ENCODE measurements at regions of chr10 and their contacts with region 1.

Region 1: GRCh38 chr10:89414146-89414878 is at the start of gene IFIT5:
- DNase-seq: peak; percentile 63 to 85 (median 72)
- H3K4me3 ChIP-seq: peak within 1 kb of the TSS; percentile 62 to 98 (median 87)
- H3K27ac ChIP-seq: peak within 1 kb of the TSS; percentile 80 to 99 (median 97)
- H3K27me3 ChIP-seq: no peaks in the 10 kb centered on the region
- CTCF ChIP-seq: peak in 20 of 56 donors; percentile 2 to 47 (median 24)
- total RNA-seq, gene IFIT5: 10.6 to 33.5 (median 19.0) TPM

Region 2: DNA sequence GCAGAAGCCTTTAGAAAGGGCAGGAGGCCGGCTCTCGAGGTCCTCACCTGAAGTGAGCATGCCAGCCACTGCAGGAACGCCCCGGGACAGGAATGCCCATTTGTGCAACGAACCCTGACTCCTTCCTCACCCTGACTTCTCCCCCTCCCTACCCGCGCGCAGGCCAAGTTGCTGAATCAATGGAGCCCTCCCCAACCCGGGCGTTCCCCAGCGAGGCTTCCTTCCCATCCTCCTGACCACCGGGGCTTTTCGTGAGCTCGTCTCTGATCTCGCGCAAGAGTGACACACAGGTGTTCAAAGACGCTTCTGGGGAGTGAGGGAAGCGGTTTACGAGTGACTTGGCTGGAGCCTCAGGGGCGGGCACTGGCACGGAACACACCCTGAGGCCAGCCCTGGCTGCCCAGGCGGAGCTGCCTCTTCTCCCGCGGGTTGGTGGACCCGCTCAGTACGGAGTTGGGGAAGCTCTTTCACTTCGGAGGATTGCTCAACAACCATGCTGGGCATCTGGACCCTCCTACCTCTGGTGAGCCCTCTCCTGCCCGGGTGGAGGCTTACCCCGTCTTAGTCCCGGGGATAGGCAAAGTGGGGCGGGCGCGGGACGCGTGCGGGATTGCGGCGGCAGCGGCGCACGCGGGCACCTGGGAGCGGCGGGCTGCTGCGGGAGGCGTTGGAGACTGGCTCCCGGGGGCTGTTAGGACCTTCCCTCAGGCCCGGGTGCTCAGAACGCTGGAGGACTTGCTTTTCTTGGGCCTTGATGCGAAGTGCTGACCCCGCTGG is 423.7 kb before region 1 on chr10 and contains the start of gene FAS:
- intact Hi-C with region 1: no loop called
- DNase-seq: peak in 8 of 10 donors; percentile 16 to 65 (median 40)
- H3K4me3 ChIP-seq: peak within 1 kb of the TSS; percentile 63 to 94 (median 82)
- H3K27ac ChIP-seq: peak within 1 kb of the TSS; percentile 36 to 97 (median 89)
- H3K27me3 ChIP-seq: no peaks in the 10 kb centered on the region
- CTCF ChIP-seq: peak in 4 of 56 donors; percentile 3 to 6 (median 5)
- total RNA-seq, gene FAS: 3.2 to 28.4 (median 12.1) TPM

Region 3: GRCh38 chr10:89029785-89030437 is 384.4 kb before region 1 on chr10:
- intact Hi-C with region 1: loop called in 1 of 2 experiments (anchors 10 kb)
- DNase-seq: peak; percentile 35 to 89 (median 78)
- H3K4me3 ChIP-seq: peak overlapping the region in 4 of 59 donors; percentile 5 to 35 (median 26)
- H3K27ac ChIP-seq: peak overlapping the region in 5 of 59 donors; percentile 3 to 23 (median 11)
- H3K27me3 ChIP-seq: no peaks in the 10 kb centered on the region
- CTCF ChIP-seq: peak; percentile 86 to 99 (median 96)

Region 4: GRCh38 chr10:89391917-89392756 is 22.2 kb before region 1 on chr10 and contains the start of gene IFIT1:
- intact Hi-C with region 1: loop called in 1 of 2 experiments (anchors 1 kb)
- DNase-seq: peak in 6 of 10 donors; percentile 40 to 65 (median 55)
- H3K4me3 ChIP-seq: peak within 1 kb of the TSS; percentile 41 to 84 (median 68)
- H3K27ac ChIP-seq: peak within 1 kb of the TSS; percentile 11 to 98 (median 93)
- H3K27me3 ChIP-seq: no peaks in the 10 kb centered on the region
- CTCF ChIP-seq: peak in 9 of 56 donors; percentile 2 to 41 (median 15)
- total RNA-seq, gene IFIT1: 23.2 to 313 (median 49.2) TPM

Region 5: GRCh38 chr10:89643431-89644331 is 229.4 kb after region 1 on chr10:
- intact Hi-C with region 1: loop called in 1 of 2 experiments (anchors 10 kb)
- DNase-seq: peak; percentile 47 to 92 (median 83)
- H3K4me3 ChIP-seq: peak overlapping the region; percentile 56 to 97 (median 83)
- H3K27ac ChIP-seq: peak overlapping the region; percentile 7 to 98 (median 89)
- H3K27me3 ChIP-seq: no peaks in the 10 kb centered on the region
- CTCF ChIP-seq: peak in 6 of 56 donors; percentile 9 to 18 (median 12)